HEK293 (cell line): ENCODE measurements at regions of chr12 and their contacts with region 1.

Region 1: DNA sequence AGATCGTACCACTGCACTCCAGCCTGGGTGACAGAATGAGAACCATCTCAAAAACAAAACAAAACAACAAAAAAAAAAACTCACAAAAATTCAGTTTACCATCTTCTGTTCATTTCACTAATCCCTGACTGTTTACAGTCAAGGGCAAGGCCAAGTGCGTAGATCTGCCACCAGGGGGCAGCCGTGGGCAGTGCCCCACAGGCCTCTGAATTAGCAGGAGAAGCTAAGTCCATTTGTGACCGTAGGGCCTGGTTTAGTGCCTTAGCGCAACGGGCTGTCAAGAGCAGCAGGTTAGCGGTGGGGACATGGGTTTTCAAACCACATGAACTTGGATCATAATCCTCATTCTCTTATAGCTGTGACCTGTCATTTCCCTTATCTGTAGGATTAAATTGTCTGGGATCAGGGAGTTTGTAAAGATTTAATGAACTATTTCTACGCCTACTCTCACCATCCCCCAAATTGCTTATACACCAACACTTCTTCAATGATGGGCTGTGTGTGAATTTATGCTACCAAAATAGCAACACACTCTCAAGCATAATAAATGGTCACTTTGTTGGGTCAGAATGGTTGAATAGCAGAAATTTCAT is 49.0 kb downstream of the KCTD10 start:
- H3K4me3 ChIP-seq: no peak overlapping the region
- H3K27ac ChIP-seq: no peak overlapping the region
- H3K4me1 ChIP-seq: no peaks in the 10 kb centered on the region
- CTCF ChIP-seq: peak; percentile 74; the same call in 1 of the 2 replicates

Region 2: GRCh38 chr12:109087250-109087649 is 340.9 kb before region 1 on chr12:
- CTCF ChIA-PET with region 1: no interaction called
- POLR2A ChIA-PET with region 1: no interaction called
- H3K4me3 ChIP-seq: no peak overlapping the region
- H3K27ac ChIP-seq: no peak overlapping the region
- H3K4me1 ChIP-seq: no peaks in the 10 kb centered on the region
- CTCF ChIP-seq: no peak

Region 3: DNA sequence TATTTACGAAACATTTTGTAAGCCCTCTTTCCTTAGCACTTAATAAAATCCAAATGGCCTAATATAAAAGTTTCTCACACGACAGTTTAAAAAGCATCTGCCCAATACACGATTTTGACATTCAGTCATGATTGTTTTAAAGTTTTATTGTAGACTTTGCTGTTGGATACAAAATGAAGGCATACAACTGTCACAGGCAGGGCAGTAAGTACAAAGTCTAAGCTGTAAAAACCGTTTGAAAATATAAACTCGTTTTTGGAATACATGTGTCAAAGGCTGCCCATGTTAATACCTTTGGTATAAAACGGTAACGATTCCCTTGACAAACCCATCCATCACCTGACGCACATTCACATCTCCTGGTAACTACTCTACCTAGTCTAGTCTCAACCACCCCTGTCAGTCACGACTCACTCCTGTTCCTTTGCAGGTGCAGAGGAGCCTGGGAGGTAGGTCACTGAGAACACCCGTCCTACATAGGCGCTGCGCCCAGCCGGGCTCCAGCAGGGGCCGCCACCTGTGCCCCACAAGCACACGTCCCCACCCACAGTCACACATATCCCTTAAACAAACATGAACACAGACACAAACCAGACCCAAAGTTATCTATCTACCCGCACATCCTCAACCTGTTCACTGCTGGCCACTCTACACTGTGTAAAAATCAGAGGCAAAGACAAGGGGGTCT is 21.9 kb after region 1 on chr12:
- CTCF ChIA-PET with region 1: interaction called, 15 read pairs
- POLR2A ChIA-PET with region 1: no interaction called
- H3K4me3 ChIP-seq: no peak overlapping the region
- H3K27ac ChIP-seq: no peak overlapping the region
- H3K4me1 ChIP-seq: no peaks in the 10 kb centered on the region
- CTCF ChIP-seq: 0 out of 2 replicates have a peak, but pooled peaks have one; percentile 22

Region 4: GRCh38 chr12:109462710-109463692 is 34.9 kb after region 1 on chr12:
- CTCF ChIA-PET with region 1: interaction called, 27 read pairs
- POLR2A ChIA-PET with region 1: no interaction called
- H3K4me3 ChIP-seq: 0 out of 2 replicates have a peak overlapping the region, but pooled peaks have one; percentile 3
- H3K27ac ChIP-seq: peak overlapping the region; percentile 24; the same call in 1 of the 2 replicates
- H3K4me1 ChIP-seq: peaks cover 19% of the 10 kb centered on the region
- CTCF ChIP-seq: no peak

Region 5: DNA sequence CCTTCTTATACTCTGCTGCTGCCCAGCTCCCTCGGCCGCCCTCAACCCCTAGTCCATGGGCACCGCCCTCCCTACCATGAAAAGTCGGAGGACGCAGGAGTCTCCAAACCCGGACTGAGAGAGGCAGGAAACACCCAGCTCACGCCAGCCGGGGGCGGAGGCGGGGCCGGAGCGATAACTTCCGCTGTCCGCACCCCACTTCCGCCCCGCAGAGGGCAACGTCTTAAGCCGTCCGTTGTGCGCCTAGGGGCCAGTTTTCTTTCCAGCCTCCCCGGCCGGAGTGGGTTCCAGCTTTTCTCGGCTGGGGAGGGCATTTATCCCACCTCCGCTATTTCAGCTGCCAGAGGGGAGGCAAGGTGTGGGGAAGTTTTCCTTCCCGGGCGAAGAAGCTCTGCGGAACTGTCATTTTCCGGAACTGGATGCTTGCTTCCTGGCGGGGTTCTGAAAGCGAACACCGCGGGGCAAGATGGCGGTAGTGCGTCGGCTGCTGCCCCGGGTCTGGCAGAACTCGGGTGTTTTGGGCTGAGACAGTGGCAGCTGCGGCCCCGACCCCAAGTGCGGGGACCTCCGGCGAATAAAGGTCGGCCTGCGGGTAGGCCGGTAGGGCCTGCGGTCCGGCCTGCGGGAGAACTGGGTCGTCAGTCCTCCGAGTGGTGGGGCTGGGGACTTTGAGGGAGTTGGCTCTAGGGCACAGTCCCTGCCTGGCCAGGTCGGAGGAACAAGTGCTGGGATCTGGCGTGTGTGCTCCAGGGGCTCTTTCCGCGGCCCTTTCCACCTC is 49.2 kb after region 1 on chr12 and contains the starts of genes KCTD10 and UBE3B:
- CTCF ChIA-PET with region 1: interaction called, 38 read pairs
- POLR2A ChIA-PET with region 1: interaction called, 6 read pairs
- H3K4me3 ChIP-seq: peak within 1 kb of the TSS; percentile 87
- H3K27ac ChIP-seq: peak within 1 kb of the TSS; percentile 90
- H3K4me1 ChIP-seq: peaks cover 5% of the 10 kb centered on the region; the same call in 1 of the 2 replicates
- CTCF ChIP-seq: peak; percentile 60; the same call in 1 of the 2 replicates